Mucosa of descending colon (tissue), 3 donors: ENCODE measurements at regions of chr3 and their contacts with region 1.

Region 1: GRCh38 chr3:173568623-173569022 is 171.1 kb downstream of the NLGN1 start:
- DNase-seq: no peak
- ATAC-seq: no peak
- H3K4me3 ChIP-seq: no peak overlapping the region
- H3K4me1 ChIP-seq: no peaks in the 10 kb centered on the region
- CTCF ChIP-seq: no peak

Region 2: GRCh38 chr3:173529067-173529711 is 39.4 kb before region 1 on chr3:
- intact Hi-C with region 1: loop called in 1 of 2 experiments (anchors 5 kb)
- DNase-seq: peak in 2 of 3 donors; percentile 4 to 26
- ATAC-seq: peak; percentile 74
- H3K4me3 ChIP-seq: no peak overlapping the region
- H3K4me1 ChIP-seq: no peaks in the 10 kb centered on the region
- CTCF ChIP-seq: no peak